A673 (cell line): ENCODE measurements at regions of chr2 and their contacts with region 1.

Region 1: GRCh38 chr2:165558832-165559231 is 89.3 kb downstream of the CSRNP3 start:
- DNase-seq: no peak
- H3K4me3 ChIP-seq: no peak overlapping the region
- H3K27ac ChIP-seq: no peak overlapping the region
- H3K4me1 ChIP-seq: peaks cover 33% of the 10 kb centered on the region
- H3K27me3 ChIP-seq: no peaks in the 10 kb centered on the region
- CTCF ChIP-seq: peak; percentile 30; the same call in 1 of the 2 replicates

Region 2: DNA sequence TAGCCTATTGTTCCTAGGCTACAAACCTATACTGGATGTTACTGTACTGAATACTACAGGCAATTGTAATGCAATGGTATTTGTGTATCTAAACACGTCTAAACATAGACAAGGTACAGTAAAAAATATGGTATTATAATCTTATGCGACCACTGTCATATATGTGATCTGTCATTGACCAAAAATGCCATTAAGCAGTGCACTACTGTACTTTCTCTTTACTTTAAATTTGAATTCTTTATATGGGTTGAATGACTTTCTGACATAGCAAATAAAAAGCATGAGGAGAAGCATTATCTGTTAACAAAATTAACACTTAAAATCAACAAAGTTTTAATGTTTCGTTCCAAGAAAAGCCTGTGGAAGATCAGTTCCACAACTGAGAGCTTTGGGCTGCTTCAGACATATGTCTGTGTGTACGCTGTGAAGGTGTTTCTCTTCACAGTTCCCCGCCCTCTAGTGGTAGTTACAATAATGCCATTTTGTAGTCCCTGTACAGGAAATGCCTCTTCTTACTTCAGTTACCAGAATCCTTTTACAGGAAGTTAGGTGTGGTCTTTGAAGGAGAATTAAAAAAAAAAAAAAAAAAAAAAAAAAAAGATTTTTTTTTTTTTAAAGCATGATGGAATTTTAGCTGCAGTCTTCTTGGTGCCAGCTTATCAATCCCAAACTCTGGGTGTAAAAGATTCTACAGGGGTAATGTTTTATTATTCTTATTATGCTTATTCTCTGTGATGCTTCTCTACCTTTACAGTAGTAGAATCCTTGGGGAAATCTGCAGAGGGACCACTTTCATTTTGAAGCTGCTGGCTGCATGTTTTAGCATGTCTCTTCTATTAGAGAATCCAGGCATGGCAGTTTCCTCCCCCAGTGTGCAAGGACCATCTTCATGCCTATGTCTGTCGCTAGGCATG is 265.1 kb before region 1 on chr2:
- CTCF ChIA-PET with region 1: no interaction called
- POLR2A ChIA-PET with region 1: interaction called, 16 read pairs
- intact Hi-C with region 1: no loop called
- DNase-seq: peak; percentile 95
- H3K4me3 ChIP-seq: no peak overlapping the region
- H3K27ac ChIP-seq: no peak overlapping the region
- H3K4me1 ChIP-seq: peaks cover 11% of the 10 kb centered on the region
- H3K27me3 ChIP-seq: no peaks in the 10 kb centered on the region
- CTCF ChIP-seq: peak; percentile 81